ENCODE measurements at regions of chr6 and their contacts with region 1.

Region 1: GRCh38 chr6:137313928-137314855 is 95.0 kb upstream of the IFNGR1 start:
- DNase-seq: peak; percentile 91
- H3K4me3 ChIP-seq: no peak overlapping the region
- H3K27ac ChIP-seq: no peak overlapping the region
- H3K4me1 ChIP-seq: peaks cover 4 to 28% (median 17%) of the 10 kb centered on the region in 6 donors
- H3K27me3 ChIP-seq: no peaks in the 10 kb centered on the region
- CTCF ChIP-seq: peak; percentile 54 to 92 (median 82)
- POLR2A ChIP-seq: no peak

Region 2: DNA sequence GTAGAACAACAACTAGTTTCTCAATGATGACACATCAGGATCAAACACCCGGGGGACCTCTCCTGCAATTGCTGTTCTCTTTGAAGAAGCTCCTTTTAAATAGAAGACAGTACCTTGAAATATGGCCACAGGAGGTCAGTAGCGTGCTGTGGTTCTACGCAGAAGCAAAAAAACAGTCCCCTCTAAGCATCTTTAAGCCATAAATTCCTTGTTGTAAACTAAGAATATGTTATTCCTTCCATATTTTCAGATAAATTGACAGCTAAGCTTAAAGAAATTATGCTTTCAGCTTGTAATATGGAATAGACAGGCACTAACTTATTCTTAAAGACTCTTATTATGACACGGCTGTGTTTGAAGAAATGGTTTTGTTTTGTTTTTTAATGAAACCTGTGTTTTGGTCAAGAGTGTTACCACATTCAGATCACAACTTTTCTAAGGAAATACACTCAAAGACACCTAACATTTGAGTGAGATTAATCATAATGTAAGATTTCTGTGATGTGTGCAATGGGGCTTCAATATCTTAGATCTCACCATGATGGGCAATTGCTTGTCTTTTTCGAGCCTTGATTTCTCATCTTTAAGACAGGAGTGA is 219.7 kb before region 1 on chr6:
- intact Hi-C with region 1: loop called (anchors 5 kb)
- DNase-seq: no peak
- H3K4me3 ChIP-seq: peak overlapping the region in 1 of 8 donors; percentile 21
- H3K27ac ChIP-seq: peak overlapping the region in 4 of 8 donors; percentile 2 to 61 (median 38)
- H3K4me1 ChIP-seq: peaks cover 0 to 61% (median 21%) of the 10 kb centered on the region in 6 donors
- H3K27me3 ChIP-seq: no peaks in the 10 kb centered on the region
- CTCF ChIP-seq: peak; percentile 17 to 77 (median 68)
- POLR2A ChIP-seq: no peak

Region 3: DNA sequence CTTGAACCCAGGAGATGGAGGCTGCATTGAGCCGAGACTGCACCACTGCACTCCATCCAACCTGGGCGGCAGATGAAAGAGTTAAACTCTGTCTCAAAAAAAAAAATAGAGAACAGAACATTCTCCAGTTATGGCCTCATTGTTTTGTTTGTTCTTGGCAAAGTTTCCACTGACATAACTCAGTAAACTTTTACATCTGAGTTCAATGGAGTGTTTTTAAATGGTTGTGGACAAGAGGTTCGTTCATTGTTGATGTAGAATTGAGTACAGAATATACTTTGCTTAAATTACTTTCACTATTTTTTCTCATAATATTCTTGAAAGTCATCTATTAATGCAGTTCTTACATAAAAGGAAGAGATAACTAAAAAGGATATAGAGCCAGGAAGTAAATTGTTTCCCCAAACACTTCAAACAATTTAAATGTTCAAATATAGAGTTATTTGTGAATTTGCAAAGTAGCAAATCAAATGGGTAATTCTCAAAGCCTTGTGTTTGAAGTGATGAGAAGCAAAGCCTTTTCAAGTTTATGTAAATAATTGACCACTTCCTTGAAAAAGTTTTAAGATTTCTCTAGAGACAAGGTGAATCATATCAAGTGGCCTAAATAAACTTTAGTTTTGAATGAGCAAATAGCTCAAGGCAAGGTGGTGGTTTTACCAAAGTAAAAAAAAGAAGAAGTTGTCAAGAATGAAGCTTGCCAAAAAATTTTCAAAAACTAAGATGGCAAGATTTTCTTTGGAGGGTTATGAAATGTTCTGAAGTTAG is 52.6 kb before region 1 on chr6:
- intact Hi-C with region 1: loop called (anchors 10 kb)
- DNase-seq: no peak
- H3K4me3 ChIP-seq: no peak overlapping the region
- H3K27ac ChIP-seq: peak overlapping the region in 5 of 8 donors; percentile 33 to 65 (median 59)
- H3K4me1 ChIP-seq: peaks cover 0 to 52% (median 14%) of the 10 kb centered on the region in 6 donors
- H3K27me3 ChIP-seq: no peaks in the 10 kb centered on the region
- CTCF ChIP-seq: no peak
- POLR2A ChIP-seq: no peak

Measured in spleen (tissue), 13 donors.